Activated naive CD4-positive, alpha-beta T cell treated with anti-CD3 and anti-CD28 coated beads, Interleukin-2, amount 10 ng/mL, durations not matched to agents 7 days and 5 days (primary cell): ENCODE measurements at regions of chr12 and their contacts with region 1.

Region 1: DNA sequence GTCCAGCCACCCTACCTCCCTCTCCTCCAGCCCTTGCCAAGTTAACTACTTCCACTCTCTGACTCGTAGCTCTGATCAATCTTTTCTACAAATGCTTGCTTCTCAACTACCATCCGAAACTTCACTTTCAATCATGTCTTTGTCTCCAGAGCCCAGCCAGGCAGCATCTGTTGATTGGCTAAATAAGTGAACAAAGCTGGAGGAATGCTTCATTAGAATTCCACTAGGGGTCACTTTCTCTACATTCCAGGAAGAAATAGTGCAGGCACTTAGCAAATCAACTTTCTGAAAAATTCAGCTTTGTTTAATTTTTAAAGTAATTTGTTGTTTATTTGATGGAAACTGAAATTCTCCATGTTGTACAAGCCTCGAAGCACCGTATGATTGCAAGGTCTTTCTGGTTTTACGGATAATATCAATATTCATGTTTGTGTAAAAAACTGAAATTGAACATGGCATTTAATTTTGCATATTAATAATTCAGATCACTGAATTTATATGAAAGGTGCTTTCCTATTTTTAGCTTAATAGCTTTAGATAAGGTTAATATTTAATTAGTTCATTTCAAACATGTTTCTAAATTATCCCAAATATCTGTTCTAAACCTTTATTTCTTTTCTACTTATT is 32.4 kb upstream of the HELB start:
- DNase-seq: peak; percentile 38
- H3K4me3 Mint-ChIP-seq: no peak overlapping the region
- H3K27ac Mint-ChIP-seq: no peak overlapping the region
- H3K4me1 Mint-ChIP-seq: peaks cover 5% of the 10 kb centered on the region
- H3K27me3 Mint-ChIP-seq: no peaks in the 10 kb centered on the region

Region 2: DNA sequence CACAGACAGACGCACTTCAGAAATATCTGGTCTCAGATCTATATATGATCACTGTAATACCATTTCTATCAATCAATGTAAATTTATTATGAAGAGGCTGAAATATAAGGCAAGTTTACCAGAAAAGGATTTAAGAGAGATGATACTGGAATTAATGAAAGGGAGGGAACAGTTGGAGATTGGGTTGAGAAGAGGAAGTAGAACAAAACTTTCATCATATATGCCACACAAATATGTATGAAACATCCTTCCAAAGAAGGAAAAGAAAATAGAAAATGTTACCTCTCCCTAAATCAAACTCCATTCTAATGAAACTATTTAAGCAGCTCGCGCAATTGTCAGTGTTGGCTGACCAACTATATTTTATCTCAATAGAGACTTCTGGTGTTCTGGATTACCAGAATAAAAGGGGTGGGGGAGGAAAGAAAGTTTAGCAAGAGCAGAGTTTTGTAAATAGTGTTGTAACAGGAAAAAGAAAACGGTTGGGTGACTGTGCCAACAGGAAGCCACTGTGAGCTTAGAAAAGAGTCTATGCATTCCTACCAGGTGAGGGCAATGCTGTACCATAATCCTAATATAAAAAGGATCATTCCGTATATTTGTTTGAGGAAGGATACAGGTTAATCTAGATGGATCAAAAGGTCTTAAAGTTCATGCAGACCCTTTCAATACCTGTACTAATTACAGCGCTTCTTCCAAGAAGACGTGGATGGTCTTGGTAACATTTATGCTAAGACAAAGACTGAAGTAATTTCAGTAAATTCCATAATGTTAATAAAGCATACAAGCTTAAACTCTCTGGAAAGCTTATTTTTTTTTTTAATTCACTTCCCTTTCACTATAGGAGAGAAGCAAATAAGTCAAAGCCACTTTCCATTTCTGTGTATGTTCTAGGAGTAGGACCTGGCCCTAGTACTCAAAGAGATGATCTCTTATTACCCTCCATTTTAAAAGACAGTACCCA is 124.8 kb before region 1 on chr12:
- CTCF ChIA-PET with region 1: interaction called, 21 read pairs
- DNase-seq: no peak
- H3K4me3 Mint-ChIP-seq: no peak overlapping the region
- H3K27ac Mint-ChIP-seq: peak overlapping the region; percentile 75
- H3K4me1 Mint-ChIP-seq: peaks cover 16% of the 10 kb centered on the region
- H3K27me3 Mint-ChIP-seq: no peaks in the 10 kb centered on the region

Region 3: DNA sequence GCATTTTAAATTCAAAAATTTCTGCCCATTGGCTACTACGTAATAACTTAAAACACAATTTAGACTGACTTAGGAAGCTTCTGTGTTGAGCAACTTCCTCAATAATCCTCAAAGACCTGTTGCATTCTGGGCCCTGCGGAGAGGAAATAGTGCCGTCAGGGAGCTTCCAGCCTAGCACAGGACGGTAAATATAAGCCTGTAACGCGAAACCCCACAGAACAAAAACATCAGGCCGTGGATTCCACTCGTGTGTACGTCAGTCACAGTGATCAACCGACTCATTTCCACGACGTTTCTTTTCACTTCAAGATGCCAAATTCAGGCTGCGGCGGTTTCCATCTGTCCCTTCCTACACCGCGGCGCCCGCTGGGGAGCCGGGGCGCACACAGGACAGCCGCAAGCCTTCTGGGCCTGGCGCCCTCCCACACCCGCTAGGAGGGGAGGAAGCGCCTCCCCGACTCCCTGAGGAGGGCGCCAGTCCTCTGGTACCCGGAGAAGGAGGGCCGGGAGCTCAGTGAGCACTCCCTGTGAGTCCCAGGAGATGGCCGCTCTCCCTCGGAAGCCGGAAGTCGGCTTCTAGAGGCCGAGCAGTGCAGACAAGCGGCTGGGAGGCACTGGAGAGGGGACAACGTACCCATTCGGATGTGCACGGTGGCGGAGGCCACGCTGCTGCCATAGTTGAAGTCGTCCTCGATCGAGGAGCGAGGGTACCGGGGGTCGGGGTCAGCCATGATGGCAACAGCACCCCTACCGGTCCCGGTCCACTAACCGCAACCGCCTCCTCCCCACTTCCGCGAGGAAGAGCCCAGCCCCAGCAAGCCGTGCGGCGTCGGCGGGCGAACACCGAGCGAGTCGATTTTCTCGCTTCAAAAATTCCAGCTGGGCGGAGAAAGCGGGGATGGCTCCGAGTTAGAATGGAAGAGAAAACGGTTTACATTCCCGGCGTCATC is 100.4 kb before region 1 on chr12 and contains the start of gene TMBIM4:
- CTCF ChIA-PET with region 1: interaction called, 12 read pairs
- DNase-seq: peak; percentile 90
- H3K4me3 Mint-ChIP-seq: peak within 1 kb of the TSS; percentile 84
- H3K27ac Mint-ChIP-seq: peak within 1 kb of the TSS; percentile 98
- H3K4me1 Mint-ChIP-seq: peaks cover 47% of the 10 kb centered on the region
- H3K27me3 Mint-ChIP-seq: no peaks in the 10 kb centered on the region

Region 4: DNA sequence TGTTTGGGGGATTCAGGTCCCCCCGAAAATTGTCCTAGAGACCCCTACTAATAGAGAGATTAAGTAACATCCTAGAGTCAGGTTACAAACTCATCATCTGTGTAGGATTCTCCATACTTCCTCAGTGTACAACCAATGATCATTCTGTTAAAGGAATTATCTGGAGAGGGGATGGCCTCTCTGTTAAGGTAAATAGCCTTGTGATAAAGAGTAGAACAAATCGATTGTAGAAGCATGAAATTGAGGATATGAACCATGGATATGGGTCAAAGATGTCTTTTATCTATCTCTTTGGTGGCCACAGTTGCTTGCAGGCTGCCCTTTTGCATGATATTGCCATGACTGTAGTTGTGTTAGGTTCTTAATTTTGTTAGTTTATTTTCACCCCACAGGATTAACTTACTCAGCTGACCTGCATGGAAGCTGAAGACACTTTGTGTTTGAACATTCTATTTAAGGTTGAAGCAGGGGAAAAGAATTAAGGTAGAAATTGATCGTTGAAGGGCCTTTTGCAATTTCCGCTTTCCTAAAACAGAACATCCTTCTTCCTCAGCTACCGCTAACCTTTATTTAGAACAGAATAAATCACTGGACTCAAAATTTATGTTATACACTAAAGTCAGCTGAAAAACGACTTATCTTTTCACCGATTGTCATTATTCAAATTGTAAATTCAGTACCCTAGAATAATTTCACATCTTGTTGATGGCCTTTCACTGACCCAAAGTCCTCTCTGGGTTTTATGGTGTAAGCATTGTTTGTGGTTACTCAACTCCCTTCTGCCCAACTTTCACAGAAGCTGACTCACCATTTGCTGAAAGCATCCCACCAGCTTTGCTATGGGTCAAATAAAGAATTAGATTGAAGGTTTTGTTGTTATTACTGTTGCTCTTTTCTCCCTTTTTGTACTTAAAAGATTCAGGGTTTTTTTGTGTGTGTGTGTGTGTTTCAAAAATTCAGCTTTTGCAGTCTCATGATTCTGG is 28.5 kb before region 1 on chr12:
- CTCF ChIA-PET with region 1: no interaction called
- DNase-seq: no peak
- H3K4me3 Mint-ChIP-seq: no peak overlapping the region
- H3K27ac Mint-ChIP-seq: no peak overlapping the region
- H3K4me1 Mint-ChIP-seq: no peaks in the 10 kb centered on the region
- H3K27me3 Mint-ChIP-seq: peaks cover 25% of the 10 kb centered on the region

Region 5: DNA sequence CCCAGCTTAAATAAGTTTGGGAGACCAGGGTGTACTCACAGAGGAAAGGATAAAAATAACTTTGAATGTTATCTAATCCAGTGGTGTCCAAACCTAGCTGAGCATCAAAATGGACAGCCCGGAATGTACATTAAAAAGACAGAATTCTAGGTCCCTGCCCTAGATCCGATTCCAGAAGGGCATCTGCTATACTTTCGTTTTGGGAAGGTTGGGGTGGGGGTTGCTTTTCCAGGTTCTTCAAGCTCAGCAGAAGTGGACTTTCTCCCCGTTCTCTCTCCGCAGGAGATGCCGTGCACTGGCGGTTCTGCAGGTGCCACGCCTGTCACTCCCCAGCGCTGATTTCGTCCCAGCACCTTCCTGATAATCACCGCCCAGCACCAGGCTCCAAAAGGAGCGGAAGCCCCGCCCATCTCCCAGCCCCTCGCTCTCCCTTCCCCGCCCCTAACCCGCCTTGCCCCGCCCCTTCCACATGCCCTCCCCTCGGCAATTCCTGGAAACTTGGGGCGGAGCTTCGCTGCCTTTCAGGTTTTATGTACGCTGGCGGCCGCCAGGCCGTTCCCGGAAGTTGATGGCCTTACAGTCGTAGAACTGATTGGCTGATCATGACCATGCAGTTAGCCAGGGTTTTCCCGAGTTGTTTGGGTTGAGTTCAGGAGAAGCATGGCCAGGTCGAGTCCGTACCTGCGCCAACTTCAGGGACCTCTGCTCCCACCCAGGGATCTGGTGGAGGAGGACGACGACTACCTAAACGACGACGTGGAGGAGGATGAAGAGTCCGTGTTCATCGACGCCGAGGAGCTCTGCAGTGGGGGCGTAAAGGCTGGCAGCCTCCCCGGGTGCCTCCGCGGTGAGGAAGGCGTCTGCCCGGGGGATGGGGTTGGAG is 32.3 kb after region 1 on chr12 and contains the start of gene HELB:
- CTCF ChIA-PET with region 1: interaction called, 17 read pairs
- DNase-seq: peak; percentile 99
- H3K4me3 Mint-ChIP-seq: peak within 1 kb of the TSS; percentile 98
- H3K27ac Mint-ChIP-seq: peak within 1 kb of the TSS; percentile 98
- H3K4me1 Mint-ChIP-seq: peaks cover 45% of the 10 kb centered on the region
- H3K27me3 Mint-ChIP-seq: peaks cover 21% of the 10 kb centered on the region

Region 6: DNA sequence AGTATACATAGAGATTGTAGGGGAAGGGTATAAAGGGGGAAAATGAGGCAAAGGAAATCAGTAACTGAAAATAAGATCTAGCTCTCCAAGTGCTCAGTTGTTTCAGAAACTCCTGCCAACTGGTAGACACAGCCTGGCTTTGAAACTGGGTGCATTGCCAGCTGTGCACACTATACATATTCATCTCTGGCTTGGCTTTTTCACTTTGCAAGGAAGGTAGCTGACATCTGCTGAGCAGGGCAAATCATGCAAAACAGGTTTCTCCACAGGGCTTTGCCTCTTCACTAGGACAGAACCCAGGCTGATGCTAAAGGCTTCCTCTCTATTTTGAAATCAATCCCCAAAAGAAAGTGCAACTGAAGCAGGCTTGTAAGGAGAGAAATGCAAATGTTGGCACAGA is 133.9 kb after region 1 on chr12:
- CTCF ChIA-PET with region 1: interaction called, 90 read pairs
- DNase-seq: no peak
- H3K4me3 Mint-ChIP-seq: no peak overlapping the region
- H3K27ac Mint-ChIP-seq: no peak overlapping the region
- H3K4me1 Mint-ChIP-seq: no peaks in the 10 kb centered on the region
- H3K27me3 Mint-ChIP-seq: peaks cover 3% of the 10 kb centered on the region

Region 7: DNA sequence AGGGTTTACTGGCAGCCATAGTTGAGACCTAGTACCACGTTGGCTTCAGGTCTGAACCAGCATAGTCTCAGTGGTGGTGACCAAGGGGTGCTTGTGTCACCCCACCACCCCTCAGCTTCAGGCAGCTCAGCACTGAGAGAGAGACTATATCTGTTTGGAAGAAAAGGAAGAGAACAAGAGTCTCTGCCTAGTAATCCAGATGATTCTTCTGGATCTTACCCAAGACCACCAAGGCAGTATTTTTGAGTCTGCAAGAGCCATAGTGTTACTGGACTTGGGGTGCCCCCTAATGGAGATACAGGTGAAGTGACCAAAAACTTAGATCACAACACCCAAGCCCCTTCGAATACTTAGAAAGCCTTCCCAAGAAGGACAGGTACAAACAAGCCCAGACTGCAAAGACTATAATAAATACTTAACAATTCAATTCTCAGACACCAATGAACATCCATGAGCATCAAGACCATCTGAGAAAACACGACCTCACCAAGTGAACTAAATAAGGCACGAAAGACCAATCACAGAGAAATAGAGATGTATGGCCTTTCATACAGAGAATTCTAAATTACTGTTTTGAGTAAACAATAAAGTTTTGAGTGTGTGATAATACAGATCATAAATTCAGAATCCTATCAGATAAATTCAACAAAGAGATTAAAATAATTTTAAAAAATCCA is 139.5 kb after region 1 on chr12:
- CTCF ChIA-PET with region 1: interaction called, 90 read pairs
- DNase-seq: peak; percentile 59
- H3K4me3 Mint-ChIP-seq: no peak overlapping the region
- H3K27ac Mint-ChIP-seq: no peak overlapping the region
- H3K4me1 Mint-ChIP-seq: no peaks in the 10 kb centered on the region
- H3K27me3 Mint-ChIP-seq: peaks cover 5% of the 10 kb centered on the region

Region 8: GRCh38 chr12:66693901-66694675 is 424.2 kb after region 1 on chr12:
- CTCF ChIA-PET with region 1: interaction called, 10 read pairs
- DNase-seq: peak; percentile 25
- H3K4me3 Mint-ChIP-seq: no peak overlapping the region
- H3K27ac Mint-ChIP-seq: no peak overlapping the region
- H3K4me1 Mint-ChIP-seq: peaks cover 14% of the 10 kb centered on the region
- H3K27me3 Mint-ChIP-seq: peaks cover 6% of the 10 kb centered on the region